ENCODE measurements at regions of chr4 and their contacts with region 1.

Region 1: GRCh38 chr4:77240469-77241066 is 83.6 kb downstream of the CCNG2 start:
- H3K4me3 Mint-ChIP-seq: no peak overlapping the region
- H3K27ac Mint-ChIP-seq: no peak overlapping the region
- H3K4me1 Mint-ChIP-seq: no peaks in the 10 kb centered on the region
- H3K27me3 Mint-ChIP-seq: peaks cover 2% of the 10 kb centered on the region

Region 2: DNA sequence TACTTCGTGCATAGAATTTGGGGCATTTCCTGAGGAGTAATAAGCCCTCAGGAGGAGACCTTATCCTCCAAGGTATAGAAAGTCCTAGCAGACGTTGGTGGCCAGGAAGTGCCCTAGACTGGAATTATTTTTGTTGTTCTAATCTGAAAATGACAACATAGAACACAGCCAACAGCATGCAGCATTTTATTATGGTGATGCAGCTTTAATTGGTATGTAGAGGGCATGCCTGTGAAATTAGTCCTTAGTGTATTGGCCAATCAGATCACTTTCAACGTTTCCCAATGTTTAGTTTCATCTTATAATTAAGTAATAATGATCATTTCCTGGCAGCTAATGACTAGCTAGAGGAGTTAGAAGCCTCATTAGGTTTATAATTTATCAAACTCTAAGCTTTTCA is 606.3 kb before region 1 on chr4:
- intact Hi-C with region 1: no loop called
- H3K4me3 Mint-ChIP-seq: no peak overlapping the region
- H3K27ac Mint-ChIP-seq: no peak overlapping the region
- H3K4me1 Mint-ChIP-seq: no peaks in the 10 kb centered on the region
- H3K27me3 Mint-ChIP-seq: peaks cover 1% of the 10 kb centered on the region

Region 3: DNA sequence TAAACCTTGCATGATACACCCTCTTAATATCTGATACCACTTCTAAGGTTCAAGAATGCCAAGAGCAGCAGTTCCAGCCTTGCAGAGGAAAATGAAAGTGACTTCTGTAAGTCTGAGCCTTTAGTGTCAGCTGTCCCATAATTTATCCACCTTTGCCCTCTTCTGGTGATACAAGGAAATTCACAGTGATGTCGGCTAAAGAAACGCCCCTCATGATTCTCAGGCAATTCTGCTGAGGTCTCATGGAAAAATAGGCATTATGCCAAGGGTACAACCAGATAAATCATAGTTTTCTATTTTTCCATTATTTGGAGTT is 192.8 kb after region 1 on chr4:
- intact Hi-C with region 1: loop called (anchors 5 kb)
- H3K4me3 Mint-ChIP-seq: no peak overlapping the region
- H3K27ac Mint-ChIP-seq: no peak overlapping the region
- H3K4me1 Mint-ChIP-seq: no peaks in the 10 kb centered on the region
- H3K27me3 Mint-ChIP-seq: no peaks in the 10 kb centered on the region

Region 4: DNA sequence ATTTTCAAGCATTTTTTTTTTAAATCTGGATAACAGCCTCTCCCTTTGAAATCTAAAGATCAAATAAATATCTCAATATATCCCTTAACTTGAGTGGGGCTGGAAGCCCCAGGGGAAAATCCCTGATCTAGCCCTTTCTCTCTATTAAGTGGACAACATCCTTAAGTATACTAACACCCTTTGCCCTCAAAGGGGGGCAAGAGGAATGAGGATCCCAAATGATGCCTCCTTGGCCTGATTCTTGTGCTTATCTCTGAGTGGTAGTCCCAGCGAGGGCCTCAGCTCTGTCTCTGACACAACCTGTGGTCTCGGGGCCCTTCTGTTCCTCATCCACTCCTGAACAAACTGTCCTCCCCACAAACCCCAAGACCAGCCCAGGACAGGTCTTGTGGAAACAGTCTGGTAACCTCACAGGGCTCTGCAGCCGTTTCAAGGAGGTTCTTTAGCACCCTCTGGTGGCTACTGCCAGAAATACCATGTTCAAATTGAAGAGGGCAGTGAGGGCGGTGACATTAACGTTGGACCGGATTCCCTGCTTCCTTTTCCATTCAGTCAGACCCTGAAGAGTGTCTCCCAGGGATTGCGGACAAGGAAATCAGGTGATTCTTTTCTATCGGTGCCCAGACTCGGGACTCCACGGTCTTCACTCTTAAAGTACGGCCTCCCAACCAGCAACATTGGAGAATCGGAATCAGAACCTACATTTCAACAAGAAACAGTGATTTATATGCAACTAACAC is 378.0 kb after region 1 on chr4:
- intact Hi-C with region 1: loop called (anchors 5 kb)
- H3K4me3 Mint-ChIP-seq: no peak overlapping the region
- H3K27ac Mint-ChIP-seq: no peak overlapping the region
- H3K4me1 Mint-ChIP-seq: peaks cover 10% of the 10 kb centered on the region
- H3K27me3 Mint-ChIP-seq: peaks cover 5% of the 10 kb centered on the region

Measured in dendritic cell treated with granulocyte-macrophage colony-stimulating factor and Interleukin-4, amounts not matched to agents 40 ng/mL and 50 ng/mL, for 4 days (primary cell).